ENCODE measurements at regions of chr4 and their contacts with region 1.

Region 1: GRCh38 chr4:185395956-185396723 is 416 bp upstream of the LRP2BP start:
- DNase-seq: peak; percentile 97 to 98
- H3K4me3 ChIP-seq: peak overlapping the region; percentile 80 to 83
- H3K27ac ChIP-seq: peak overlapping the region; percentile 100
- H3K4me1 ChIP-seq: peaks cover 14% of the 10 kb centered on the region
- H3K27me3 ChIP-seq: no peaks in the 10 kb centered on the region
- CTCF ChIP-seq: no peak
- POLR2A ChIP-seq: peak; percentile 65 to 88

Region 2: DNA sequence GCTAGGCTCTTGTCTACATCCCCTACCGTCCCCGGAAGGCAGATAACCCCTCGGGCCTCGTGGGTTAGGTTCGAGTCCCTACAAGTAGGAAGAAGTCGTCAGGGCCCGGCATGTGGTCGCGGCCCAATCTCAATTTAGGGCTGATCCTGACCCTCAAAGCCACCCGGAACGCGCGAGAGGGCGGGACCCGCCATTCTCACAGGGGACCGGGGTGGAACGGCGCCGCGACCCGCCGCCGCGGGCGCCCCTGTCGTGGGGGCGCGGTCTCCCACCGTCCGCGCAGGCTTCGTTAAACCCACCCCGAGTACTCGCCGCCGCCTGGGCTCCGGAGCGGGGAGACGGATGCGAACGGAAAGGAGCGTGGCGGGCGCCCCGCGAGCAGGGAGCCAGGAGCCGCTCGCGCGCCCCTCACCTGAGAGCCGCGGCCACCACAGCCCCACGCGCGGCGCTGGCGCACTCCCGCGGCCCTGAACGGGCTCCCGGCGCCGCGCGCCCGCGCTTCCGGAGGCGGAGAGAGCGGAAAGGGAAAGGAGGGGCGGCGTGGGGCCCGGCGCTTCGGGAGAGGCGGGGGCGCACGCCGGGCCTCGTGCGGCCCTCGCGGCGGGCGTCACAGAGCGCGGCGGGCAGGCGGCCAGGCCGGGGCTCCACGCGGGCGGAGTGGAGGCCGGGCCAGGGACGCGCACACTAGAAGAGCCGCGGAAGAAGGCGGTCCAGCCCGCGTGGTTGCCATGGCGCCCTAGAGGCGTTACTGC is 192.5 kb before region 1 on chr4 and contains the start of gene CFAP97:
- intact Hi-C with region 1: loop called (anchors 10 kb)
- DNase-seq: no peak
- H3K4me3 ChIP-seq: peak within 1 kb of the TSS; percentile 82 to 94
- H3K27ac ChIP-seq: peak within 1 kb of the TSS; percentile 98
- H3K4me1 ChIP-seq: peaks cover 30% of the 10 kb centered on the region
- H3K27me3 ChIP-seq: no peaks in the 10 kb centered on the region
- CTCF ChIP-seq: no peak
- POLR2A ChIP-seq: peak in 1 of 2 donors; percentile 77
- total RNA-seq, gene CFAP97: 28.5 TPM

Region 3: GRCh38 chr4:185263419-185263818 is 132.7 kb before region 1 on chr4:
- intact Hi-C with region 1: no loop called
- DNase-seq: no peak
- H3K4me3 ChIP-seq: no peak overlapping the region
- H3K27ac ChIP-seq: no peak overlapping the region
- H3K4me1 ChIP-seq: no peaks in the 10 kb centered on the region
- H3K27me3 ChIP-seq: no peaks in the 10 kb centered on the region
- CTCF ChIP-seq: no peak
- POLR2A ChIP-seq: no peak

Region 4: DNA sequence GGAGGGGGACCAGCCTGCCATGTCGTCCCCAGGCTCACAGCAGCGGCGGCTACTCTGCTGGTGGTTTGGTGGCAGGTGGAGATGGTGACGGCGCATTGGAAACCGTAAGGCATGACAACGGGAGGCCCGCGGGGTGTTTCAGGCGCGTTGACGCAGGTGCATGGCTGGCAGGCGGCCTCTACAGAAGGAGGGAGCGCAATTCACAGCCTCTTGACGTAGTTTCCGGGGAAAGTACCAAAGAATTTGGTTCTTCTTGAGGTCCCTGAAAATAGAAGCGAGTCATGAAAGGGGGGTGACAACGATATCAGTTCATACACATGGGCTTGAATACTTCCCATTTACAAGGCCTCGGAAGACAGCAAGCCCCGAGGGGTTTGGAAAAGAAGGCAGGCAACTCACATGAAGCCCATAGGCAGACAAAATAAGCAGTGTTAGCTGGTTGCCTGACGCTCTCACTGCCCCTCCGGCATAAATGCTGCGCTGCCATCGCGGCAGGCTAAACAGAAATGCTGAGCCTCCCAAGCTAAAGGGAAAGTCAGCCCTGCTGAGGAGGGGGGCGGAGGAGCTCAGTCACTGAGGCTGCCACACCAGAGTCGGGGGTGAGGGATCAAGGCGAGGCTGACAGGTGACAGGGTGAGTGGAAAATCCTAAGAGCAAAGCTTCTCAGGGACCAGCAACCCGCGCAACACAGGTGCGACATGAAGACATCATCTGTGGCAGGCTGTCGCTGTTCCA is 191.5 kb after region 1 on chr4:
- intact Hi-C with region 1: loop called (anchors 10 kb)
- DNase-seq: no peak
- H3K4me3 ChIP-seq: no peak overlapping the region
- H3K27ac ChIP-seq: no peak overlapping the region
- H3K4me1 ChIP-seq: no peaks in the 10 kb centered on the region
- H3K27me3 ChIP-seq: no peaks in the 10 kb centered on the region
- CTCF ChIP-seq: no peak
- POLR2A ChIP-seq: no peak

Region 5: DNA sequence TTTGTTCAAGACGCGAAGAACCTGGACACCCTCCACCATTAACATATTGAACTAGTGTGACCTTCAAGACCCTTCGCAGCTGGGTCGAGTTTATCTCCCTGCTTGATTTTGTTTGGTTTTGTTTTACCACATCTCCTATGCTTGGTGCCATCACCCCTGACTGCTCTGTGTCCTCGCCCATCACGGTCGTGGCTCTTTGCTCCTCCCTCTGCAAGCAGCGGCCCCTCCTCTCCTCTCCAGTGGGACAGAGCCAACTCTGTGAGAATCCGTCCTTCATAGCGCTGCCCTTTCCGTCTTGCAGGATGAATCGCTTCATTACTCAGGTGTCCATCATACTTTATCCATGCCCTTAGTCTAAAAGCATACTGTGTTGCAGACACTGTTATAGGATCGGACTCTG is 699.3 kb after region 1 on chr4:
- intact Hi-C with region 1: no loop called
- DNase-seq: no peak
- H3K4me3 ChIP-seq: peak overlapping the region in 1 of 2 donors; percentile 10
- H3K27ac ChIP-seq: no peak overlapping the region
- H3K4me1 ChIP-seq: no peaks in the 10 kb centered on the region
- H3K27me3 ChIP-seq: no peaks in the 10 kb centered on the region
- CTCF ChIP-seq: no peak
- POLR2A ChIP-seq: no peak